H1 (cell line): ENCODE measurements at regions of chr2 and their contacts with region 1.

Region 1: DNA sequence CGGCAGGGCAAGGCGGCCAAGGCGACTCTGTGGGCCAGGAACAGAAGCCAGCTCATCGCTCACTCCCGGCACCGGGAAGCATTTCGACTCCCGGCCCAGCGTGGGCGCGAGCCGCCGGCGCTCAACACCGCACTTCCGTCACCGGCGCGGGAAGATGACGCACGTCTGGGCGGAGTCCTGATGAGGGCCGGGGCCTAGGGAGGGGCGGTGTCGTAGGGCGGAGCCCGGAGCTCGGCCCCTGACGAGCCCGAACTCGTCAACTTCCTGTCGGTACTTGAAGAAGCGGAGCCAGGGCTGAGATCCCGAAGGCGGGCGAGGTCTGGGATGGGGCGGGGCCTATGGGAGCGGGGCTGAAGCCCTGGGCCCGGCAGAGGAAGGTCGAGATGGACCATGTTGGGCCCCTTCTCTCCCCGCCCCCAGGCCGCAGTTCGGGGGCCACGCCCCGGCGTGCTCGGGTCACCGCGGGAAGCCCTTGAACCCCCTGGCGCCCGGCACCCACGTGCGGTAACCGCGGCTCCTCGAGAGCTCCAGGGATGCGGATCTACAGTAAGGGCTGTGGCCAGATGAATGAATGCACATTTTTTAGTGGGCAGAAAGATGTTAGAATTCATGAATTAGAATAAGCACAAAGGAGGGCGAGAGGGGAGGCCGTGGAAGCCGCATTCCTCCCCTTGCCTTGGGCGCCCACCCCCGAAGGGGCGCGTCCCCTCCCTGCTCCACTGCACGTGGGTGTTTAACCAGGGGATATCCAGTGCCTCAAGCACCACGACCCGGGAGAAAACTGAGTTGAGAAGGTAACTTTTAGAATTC is at the start of gene RNASEH1:
- DNase-seq: peak; percentile 98 to 100
- H3K4me3 ChIP-seq: peak within 1 kb of the TSS; percentile 84 to 99 (median 94)
- H3K27ac ChIP-seq: peak within 1 kb of the TSS; percentile 92
- H3K4me1 ChIP-seq: peaks cover 0 to 7% (median 2%) of the 10 kb centered on the region in 4 experiments; a peak in 4 of 7 replicates
- H3K27me3 ChIP-seq: no peaks in the 10 kb centered on the region
- CTCF ChIP-seq: no peak
- EP300 ChIP-seq: no peak
- POLR2A ChIP-seq: peak; percentile 86 to 89; a peak in 2 of 3 replicates
- RAD21 ChIP-seq: no peak
- total RNA-seq, gene RNASEH1: 40.8 and 42.7 TPM in 2 replicates

Region 2: DNA sequence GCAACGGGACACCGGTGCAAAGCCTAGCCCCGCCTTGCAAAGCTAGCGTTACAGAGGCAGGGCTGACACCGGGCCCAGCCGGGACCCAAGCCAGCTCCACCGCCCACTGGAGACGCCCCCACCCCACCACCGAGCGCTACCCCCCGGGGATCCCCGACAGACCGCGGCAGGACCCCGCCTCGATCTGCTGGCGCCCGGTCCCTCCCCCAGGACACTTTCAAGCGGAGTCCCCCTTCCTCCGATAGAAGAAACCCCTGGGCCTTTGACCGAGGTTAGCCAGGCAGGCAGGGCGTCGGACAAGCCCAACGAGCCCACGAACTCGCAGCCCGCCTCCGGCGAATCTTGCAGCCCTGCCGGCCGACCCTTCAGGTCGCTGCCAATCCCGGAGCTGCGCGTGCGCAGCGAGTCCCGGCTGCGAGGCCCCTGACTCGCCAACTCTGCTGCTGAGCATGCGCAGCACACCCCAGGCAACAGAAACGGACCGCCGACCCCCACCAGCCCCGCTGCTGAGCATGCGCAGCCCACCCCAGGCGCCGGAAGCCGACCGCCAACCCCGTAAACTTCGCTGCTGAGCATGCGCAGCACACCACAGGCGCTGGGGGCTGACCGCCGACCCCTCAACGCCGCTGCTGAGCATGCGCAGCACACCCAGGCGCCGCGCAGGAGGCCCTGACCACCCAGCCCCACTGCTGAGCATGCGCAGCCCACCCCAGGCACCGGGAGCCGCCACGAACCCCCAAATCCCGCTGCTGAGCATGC is 39.7 kb before region 1 on chr2:
- CTCF ChIA-PET with region 1: no interaction called
- POLR2A ChIA-PET with region 1: interaction called, 17 read pairs
- DNase-seq: peak; percentile 98 to 99
- H3K4me3 ChIP-seq: peak overlapping the region; percentile 54 to 78 (median 70)
- H3K27ac ChIP-seq: peak overlapping the region; percentile 86; the same call in 1 of the 2 replicates
- H3K4me1 ChIP-seq: peaks cover 0 to 3% (median 1%) of the 10 kb centered on the region in 4 experiments; a peak in 3 of 7 replicates
- H3K27me3 ChIP-seq: no peaks in the 10 kb centered on the region
- CTCF ChIP-seq: no peak; a peak in 1 of 4 replicates
- EP300 ChIP-seq: no peak
- POLR2A ChIP-seq: no peak; a peak in 1 of 3 replicates
- RAD21 ChIP-seq: no peak

Region 3: DNA sequence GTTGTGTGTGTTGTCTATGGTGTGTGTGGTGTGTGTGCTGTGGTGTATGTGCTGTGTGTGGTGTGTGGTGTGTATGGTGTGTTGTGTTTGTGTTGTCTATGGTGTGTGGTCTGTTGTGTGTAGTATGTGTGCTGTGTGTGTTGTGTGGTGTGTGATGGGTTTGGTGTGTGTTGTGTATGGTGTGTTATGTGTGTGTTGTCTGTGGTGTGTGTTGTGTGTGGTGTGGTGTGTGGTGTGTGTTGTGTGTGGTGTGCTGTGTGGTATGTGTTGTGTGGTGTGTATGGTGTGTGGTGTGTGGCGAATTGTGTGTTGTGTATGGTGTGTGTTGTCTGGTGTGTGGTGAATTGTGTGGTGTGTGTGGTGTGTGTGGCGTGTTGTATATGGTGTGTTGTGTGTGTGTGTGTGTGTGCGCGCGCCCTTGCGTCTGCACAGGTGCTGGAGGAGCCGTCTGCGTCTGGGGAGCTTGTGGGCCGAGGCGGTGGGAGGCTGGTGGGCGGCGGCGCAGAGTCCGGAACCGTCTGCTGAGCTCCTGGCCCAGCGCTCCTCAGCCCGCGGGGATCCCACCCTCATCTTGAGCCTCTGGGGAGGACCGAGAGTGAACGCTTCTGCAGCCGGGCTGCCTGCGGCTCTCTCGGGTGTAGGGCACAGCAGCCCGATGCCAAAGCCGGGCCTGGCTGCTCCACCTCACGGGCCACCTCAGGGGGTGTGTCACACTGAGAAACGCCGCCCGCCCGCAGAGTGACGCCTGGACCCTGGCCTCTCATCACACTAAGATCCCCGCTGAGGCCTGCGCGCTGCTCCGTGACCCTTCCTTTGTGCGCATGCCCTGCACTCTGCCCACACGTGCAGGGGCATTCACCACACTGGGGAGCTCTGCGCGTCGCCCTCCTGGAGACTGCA is 30.3 kb before region 1 on chr2:
- CTCF ChIA-PET with region 1: no interaction called
- POLR2A ChIA-PET with region 1: interaction called, 10 read pairs
- DNase-seq: peak in 1 of 2 experiments; percentile 32
- H3K4me3 ChIP-seq: no peak overlapping the region
- H3K27ac ChIP-seq: no peak overlapping the region
- H3K4me1 ChIP-seq: peaks cover 0 to 4% (median 0%) of the 10 kb centered on the region in 4 experiments; a peak in 1 of 7 replicates
- H3K27me3 ChIP-seq: no peaks in the 10 kb centered on the region
- CTCF ChIP-seq: no peak
- EP300 ChIP-seq: no peak
- POLR2A ChIP-seq: no peak
- RAD21 ChIP-seq: no peak

Region 4: GRCh38 chr2:3539836-3540235 is 18.6 kb before region 1 on chr2:
- CTCF ChIA-PET with region 1: interaction called, 6 read pairs
- POLR2A ChIA-PET with region 1: interaction called, 35 read pairs
- DNase-seq: no peak
- H3K4me3 ChIP-seq: no peak overlapping the region
- H3K27ac ChIP-seq: no peak overlapping the region
- H3K4me1 ChIP-seq: no peaks in the 10 kb centered on the region; a peak in 1 of 7 replicates
- H3K27me3 ChIP-seq: no peaks in the 10 kb centered on the region
- CTCF ChIP-seq: peak in 2 of 3 experiments; percentile 1 to 7; a peak in 1 of 4 replicates
- EP300 ChIP-seq: no peak
- POLR2A ChIP-seq: no peak
- RAD21 ChIP-seq: no peak

Region 5: DNA sequence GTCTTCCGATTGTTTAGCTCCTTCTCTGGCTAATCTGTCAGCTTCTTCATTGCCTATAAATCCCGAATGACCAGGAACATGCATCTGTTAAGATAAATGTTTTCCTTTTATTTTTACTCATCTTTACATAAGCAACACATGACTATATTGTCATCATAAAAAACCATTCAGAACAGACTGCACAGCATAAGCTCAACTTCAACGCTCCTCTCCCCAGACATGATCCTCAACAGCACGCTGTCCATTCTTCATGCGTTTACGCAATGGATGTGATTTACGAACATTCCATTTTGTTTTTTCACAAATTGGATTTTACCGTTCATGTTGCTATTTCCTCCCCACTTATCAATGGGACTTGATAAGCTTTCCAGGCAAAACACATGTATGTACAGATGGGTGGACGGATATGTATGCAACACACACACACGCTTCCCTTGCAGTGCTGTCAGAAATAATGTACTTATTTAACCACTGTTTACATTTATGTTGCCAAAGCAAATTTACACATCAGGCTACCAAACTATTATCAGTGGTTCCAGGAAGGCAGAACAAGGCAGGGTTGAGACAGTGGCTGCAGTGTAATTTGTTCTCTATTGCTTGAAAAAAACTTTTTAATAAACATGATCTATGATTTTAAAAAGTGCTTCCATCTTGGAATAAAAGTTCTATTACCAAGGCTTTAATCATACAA is 12.5 kb before region 1 on chr2:
- CTCF ChIA-PET with region 1: interaction called, 6 read pairs
- POLR2A ChIA-PET with region 1: interaction called, 35 read pairs
- DNase-seq: no peak
- H3K4me3 ChIP-seq: no peak overlapping the region
- H3K27ac ChIP-seq: no peak overlapping the region
- H3K4me1 ChIP-seq: no peaks in the 10 kb centered on the region
- H3K27me3 ChIP-seq: no peaks in the 10 kb centered on the region
- CTCF ChIP-seq: no peak
- EP300 ChIP-seq: no peak
- POLR2A ChIP-seq: no peak
- RAD21 ChIP-seq: no peak

Region 6: DNA sequence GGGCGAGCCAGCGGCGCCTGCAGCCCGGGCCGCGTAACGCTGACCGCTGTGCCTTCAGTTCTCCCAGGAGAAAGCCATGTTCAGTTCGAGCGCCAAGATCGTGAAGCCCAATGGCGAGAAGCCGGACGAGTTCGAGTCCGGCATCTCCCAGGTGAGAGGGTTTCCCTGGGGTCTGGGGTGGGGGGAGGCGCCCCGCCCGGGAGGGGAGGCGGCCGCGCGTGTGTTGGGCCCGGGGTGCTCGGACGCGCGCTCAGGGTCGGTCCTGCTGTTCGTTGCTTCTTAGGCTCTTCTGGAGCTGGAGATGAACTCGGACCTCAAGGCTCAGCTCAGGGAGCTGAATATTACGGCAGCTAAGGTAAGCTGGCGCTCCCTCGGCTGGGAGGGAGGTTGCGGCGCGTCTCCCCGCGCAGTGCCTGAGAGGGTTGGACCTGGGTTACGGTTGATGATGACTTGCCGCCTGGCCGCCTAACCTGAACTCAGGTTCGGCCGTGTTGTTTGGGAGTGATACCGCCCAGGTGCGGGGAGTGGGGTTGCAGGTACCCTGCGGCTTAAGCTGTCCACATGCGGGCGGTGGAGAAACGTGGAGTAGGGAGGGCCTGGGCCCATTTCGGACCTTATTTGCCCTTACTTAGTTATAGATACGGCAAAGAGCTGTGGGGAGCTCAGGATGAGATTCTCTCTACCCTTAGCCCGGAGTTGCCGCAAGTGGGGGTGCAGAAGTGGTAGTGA is 17.3 kb after region 1 on chr2:
- CTCF ChIA-PET with region 1: interaction called, 5 read pairs
- POLR2A ChIA-PET with region 1: interaction called, 373 read pairs
- DNase-seq: no peak
- H3K4me3 ChIP-seq: peak overlapping the region; percentile 88 to 100 (median 94)
- H3K27ac ChIP-seq: peak overlapping the region; percentile 74
- H3K4me1 ChIP-seq: peaks cover 0 to 4% (median 2%) of the 10 kb centered on the region in 4 experiments; a peak in 2 of 7 replicates
- H3K27me3 ChIP-seq: no peaks in the 10 kb centered on the region
- CTCF ChIP-seq: no peak
- EP300 ChIP-seq: no peak
- POLR2A ChIP-seq: no peak; a peak in 1 of 3 replicates
- RAD21 ChIP-seq: no peak

Region 7: GRCh38 chr2:3651691-3652648 is 93.6 kb after region 1 on chr2:
- CTCF ChIA-PET with region 1: interaction called, 12 read pairs
- POLR2A ChIA-PET with region 1: interaction called, 26 read pairs
- DNase-seq: peak; percentile 70 to 88
- H3K4me3 ChIP-seq: peak overlapping the region; percentile 13 to 67 (median 60); a peak in 7 of 8 replicates
- H3K27ac ChIP-seq: peak overlapping the region; percentile 85
- H3K4me1 ChIP-seq: peaks cover 0 to 14% (median 11%) of the 10 kb centered on the region in 4 experiments; a peak in 6 of 7 replicates
- H3K27me3 ChIP-seq: peaks cover 0 to 2% (median 0%) of the 10 kb centered on the region in 4 experiments; a peak in 1 of 7 replicates
- CTCF ChIP-seq: no peak
- EP300 ChIP-seq: no peak
- POLR2A ChIP-seq: peak in 1 of 2 experiments; percentile 74; a peak in 1 of 3 replicates
- RAD21 ChIP-seq: no peak